Naive thymus-derived CD4-positive, alpha-beta T cell (primary cell): ENCODE measurements at regions of chr6 and their contacts with region 1.

Region 1: DNA sequence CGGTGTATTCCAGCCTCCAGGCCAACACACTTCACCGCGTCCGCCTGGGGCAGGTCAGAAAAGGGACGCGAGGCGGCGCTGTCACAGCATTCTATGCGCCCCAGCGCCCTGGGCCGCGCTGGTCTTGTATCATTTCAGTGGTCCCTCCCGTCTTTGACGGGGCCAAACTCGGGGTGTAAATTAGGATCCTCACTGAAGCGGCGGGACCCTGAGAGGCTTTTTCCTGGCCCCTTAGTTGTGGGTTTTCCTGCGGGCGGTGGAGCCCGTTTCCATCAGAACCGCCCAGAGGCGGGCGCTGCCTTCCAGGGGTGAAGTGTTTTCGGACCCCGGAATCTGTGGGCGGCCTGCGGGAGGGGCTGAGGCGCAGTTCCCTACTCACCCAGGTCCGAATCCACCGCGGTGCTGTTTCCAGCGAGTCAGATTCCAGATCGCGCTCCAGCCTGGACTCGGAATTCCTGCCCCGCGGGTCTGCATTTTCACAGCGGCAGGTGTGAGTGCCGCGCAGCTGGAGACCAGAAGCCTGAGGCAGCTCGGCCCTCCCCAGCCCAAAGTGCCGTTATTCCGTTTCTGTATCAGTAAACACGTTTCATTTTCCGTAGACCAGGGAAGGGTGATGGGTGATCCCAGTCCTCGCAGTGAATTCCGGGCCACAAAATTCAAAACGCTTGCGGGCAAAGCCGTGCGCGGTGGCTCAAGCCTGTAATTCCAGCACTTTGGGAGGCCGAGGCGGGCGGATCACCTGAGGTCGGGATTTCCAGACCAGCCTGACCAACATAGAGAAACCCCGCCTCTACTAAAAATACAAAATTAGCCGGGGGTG is 3.9 kb upstream of the MICB start:
- DNase-seq: peak; percentile 33 to 78 (median 62)
- ATAC-seq: peak; percentile 65
- H3K4me3 ChIP-seq: peak overlapping the region; percentile 87
- H3K4me3 Mint-ChIP-seq: peak overlapping the region; percentile 78 to 93 (median 88)
- H3K27ac ChIP-seq: peak overlapping the region; percentile 81
- H3K27ac Mint-ChIP-seq: peak overlapping the region; percentile 36 to 98 (median 87)
- H3K4me1 ChIP-seq: peaks cover 17 to 24% of the 10 kb centered on the region in 2 donors
- H3K4me1 Mint-ChIP-seq: peaks cover 41 to 61% (median 50%) of the 10 kb centered on the region in 7 donors
- H3K27me3 ChIP-seq: no peaks in the 10 kb centered on the region
- H3K27me3 Mint-ChIP-seq: no peaks in the 10 kb centered on the region

Region 2: DNA sequence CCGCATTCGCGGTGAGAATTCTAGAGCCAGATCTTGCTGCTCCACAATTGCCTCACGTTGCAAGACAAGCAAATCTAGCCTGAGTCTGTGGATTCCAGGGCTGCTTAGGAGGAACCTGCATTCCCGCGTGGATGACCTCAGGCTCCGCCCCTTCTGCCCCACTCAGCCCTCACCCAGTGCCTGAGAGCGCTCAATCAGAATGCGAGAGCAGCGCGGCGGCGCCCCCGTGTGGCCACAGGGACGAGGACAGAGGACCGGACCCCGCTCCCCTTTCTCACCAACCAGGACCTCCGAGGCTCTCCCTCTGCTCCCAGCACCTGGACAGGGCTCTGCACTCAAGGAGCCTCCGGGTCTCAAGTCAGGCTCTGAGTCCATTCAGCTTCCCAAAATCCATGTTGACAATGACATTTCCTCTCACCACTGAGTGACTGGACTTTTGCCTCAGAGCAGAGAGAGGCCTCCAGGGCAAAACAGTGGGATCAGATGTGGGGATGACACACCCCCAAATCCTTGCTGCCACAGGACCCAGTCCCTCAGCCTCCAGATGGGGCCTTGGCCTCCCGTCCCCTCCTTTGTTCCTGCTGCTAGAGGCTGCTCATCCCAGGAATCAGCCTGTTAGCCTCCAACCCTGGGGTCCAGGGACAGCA is 1097.1 kb before region 1 on chr6:
- CTCF ChIA-PET with region 1: no interaction called
- POLR2A ChIA-PET with region 1: no interaction called
- intact Hi-C with region 1: no loop called
- DNase-seq: peak; percentile 58 to 89 (median 76)
- ATAC-seq: peak; percentile 99
- H3K4me3 ChIP-seq: no peak overlapping the region
- H3K4me3 Mint-ChIP-seq: peak overlapping the region in 2 of 10 donors; percentile 39 to 44
- H3K27ac ChIP-seq: no peak overlapping the region
- H3K27ac Mint-ChIP-seq: peak overlapping the region in 1 of 9 donors; percentile 67
- H3K4me1 ChIP-seq: no peaks in the 10 kb centered on the region
- H3K4me1 Mint-ChIP-seq: peaks cover 0 to 6% (median 0%) of the 10 kb centered on the region in 7 donors
- H3K27me3 ChIP-seq: peaks cover 0 to 4% of the 10 kb centered on the region in 2 donors
- H3K27me3 Mint-ChIP-seq: peaks cover 20 to 51% (median 40%) of the 10 kb centered on the region in 5 donors

Region 3: GRCh38 chr6:31403283-31403989 is 90.6 kb before region 1 on chr6 and contains the start of gene MICA:
- CTCF ChIA-PET with region 1: interaction called, 4 read pairs
- POLR2A ChIA-PET with region 1: interaction called, 4 read pairs
- intact Hi-C with region 1: loop called in 1 of 2 experiments (anchors 2 kb)
- DNase-seq: peak in 8 of 9 donors; percentile 32 to 79 (median 41)
- ATAC-seq: peak; percentile 71
- H3K4me3 ChIP-seq: peak within 1 kb of the TSS; percentile 79
- H3K4me3 Mint-ChIP-seq: peak within 1 kb of the TSS; percentile 83 to 98 (median 90)
- H3K27ac ChIP-seq: peak within 1 kb of the TSS; percentile 76
- H3K27ac Mint-ChIP-seq: peak within 1 kb of the TSS; percentile 25 to 94 (median 78)
- H3K4me1 ChIP-seq: peaks cover 17 to 19% of the 10 kb centered on the region in 2 donors
- H3K4me1 Mint-ChIP-seq: peaks cover 64 to 90% (median 70%) of the 10 kb centered on the region in 7 donors
- H3K27me3 ChIP-seq: no peaks in the 10 kb centered on the region
- H3K27me3 Mint-ChIP-seq: peaks cover 0 to 2% (median 0%) of the 10 kb centered on the region in 5 donors
- total RNA-seq, gene MICA: 12.1 to 17.4 (median 15.2) TPM

Region 4: GRCh38 chr6:31462964-31463870 is 30.9 kb before region 1 on chr6:
- CTCF ChIA-PET with region 1: interaction called, 3 read pairs
- POLR2A ChIA-PET with region 1: interaction called, 3 read pairs
- intact Hi-C with region 1: loop called in 1 of 2 experiments (anchors 1 kb)
- DNase-seq: peak; percentile 77 to 92 (median 90)
- ATAC-seq: peak; percentile 95
- H3K4me3 ChIP-seq: peak overlapping the region; percentile 90
- H3K4me3 Mint-ChIP-seq: peak overlapping the region; percentile 96 to 100 (median 100)
- H3K27ac ChIP-seq: peak overlapping the region; percentile 99
- H3K27ac Mint-ChIP-seq: peak overlapping the region; percentile 96 to 99 (median 99)
- H3K4me1 ChIP-seq: peaks cover 34 to 37% of the 10 kb centered on the region in 2 donors
- H3K4me1 Mint-ChIP-seq: peaks cover 41 to 70% (median 61%) of the 10 kb centered on the region in 7 donors
- H3K27me3 ChIP-seq: no peaks in the 10 kb centered on the region
- H3K27me3 Mint-ChIP-seq: peaks cover 0 to 9% (median 0%) of the 10 kb centered on the region in 5 donors

Region 5: GRCh38 chr6:31541658-31542521 is 47.8 kb after region 1 on chr6 and contains the start of gene DDX39B:
- CTCF ChIA-PET with region 1: interaction called, 28 read pairs
- POLR2A ChIA-PET with region 1: interaction called, 77 read pairs
- intact Hi-C with region 1: loop called (anchors 1 kb)
- DNase-seq: peak; percentile 80 to 97 (median 94)
- ATAC-seq: peak; percentile 83
- H3K4me3 ChIP-seq: peak within 1 kb of the TSS; percentile 77
- H3K4me3 Mint-ChIP-seq: peak within 1 kb of the TSS; percentile 84 to 99 (median 98)
- H3K27ac ChIP-seq: peak within 1 kb of the TSS; percentile 97
- H3K27ac Mint-ChIP-seq: peak within 1 kb of the TSS; percentile 90 to 100 (median 100)
- H3K4me1 ChIP-seq: peaks cover 34 to 45% of the 10 kb centered on the region in 2 donors
- H3K4me1 Mint-ChIP-seq: peaks cover 34 to 65% (median 55%) of the 10 kb centered on the region in 7 donors
- H3K27me3 ChIP-seq: no peaks in the 10 kb centered on the region
- H3K27me3 Mint-ChIP-seq: no peaks in the 10 kb centered on the region
- total RNA-seq, gene DDX39B: 443 to 761 (median 546) TPM

Region 6: DNA sequence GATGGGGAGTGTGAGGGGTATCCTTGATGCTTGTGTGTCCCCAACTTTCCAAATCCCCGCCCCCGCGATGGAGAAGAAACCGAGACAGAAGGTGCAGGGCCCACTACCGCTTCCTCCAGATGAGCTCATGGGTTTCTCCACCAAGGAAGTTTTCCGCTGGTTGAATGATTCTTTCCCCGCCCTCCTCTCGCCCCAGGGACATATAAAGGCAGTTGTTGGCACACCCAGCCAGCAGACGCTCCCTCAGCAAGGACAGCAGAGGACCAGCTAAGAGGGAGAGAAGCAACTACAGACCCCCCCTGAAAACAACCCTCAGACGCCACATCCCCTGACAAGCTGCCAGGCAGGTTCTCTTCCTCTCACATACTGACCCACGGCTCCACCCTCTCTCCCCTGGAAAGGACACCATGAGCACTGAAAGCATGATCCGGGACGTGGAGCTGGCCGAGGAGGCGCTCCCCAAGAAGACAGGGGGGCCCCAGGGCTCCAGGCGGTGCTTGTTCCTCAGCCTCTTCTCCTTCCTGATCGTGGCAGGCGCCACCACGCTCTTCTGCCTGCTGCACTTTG is 81.3 kb after region 1 on chr6 and contains the start of gene TNF:
- CTCF ChIA-PET with region 1: interaction called, 3 read pairs
- POLR2A ChIA-PET with region 1: interaction called, 36 read pairs
- intact Hi-C with region 1: loop called in 1 of 2 experiments (anchors 2 kb)
- DNase-seq: peak in 4 of 9 donors; percentile 37 to 89 (median 59)
- ATAC-seq: peak; percentile 26
- H3K4me3 ChIP-seq: peak within 1 kb of the TSS; percentile 77
- H3K4me3 Mint-ChIP-seq: peak within 1 kb of the TSS; percentile 85 to 99 (median 94)
- H3K27ac ChIP-seq: peak within 1 kb of the TSS; percentile 97
- H3K27ac Mint-ChIP-seq: peak within 1 kb of the TSS; percentile 91 to 99 (median 99)
- H3K4me1 ChIP-seq: peaks cover 62 to 71% of the 10 kb centered on the region in 2 donors
- H3K4me1 Mint-ChIP-seq: peaks cover 54 to 98% (median 90%) of the 10 kb centered on the region in 7 donors
- H3K27me3 ChIP-seq: no peaks in the 10 kb centered on the region
- H3K27me3 Mint-ChIP-seq: peaks cover 0 to 3% (median 0%) of the 10 kb centered on the region in 5 donors
- total RNA-seq, gene TNF: 5.4 to 125 (median 8.7) TPM

Region 7: DNA sequence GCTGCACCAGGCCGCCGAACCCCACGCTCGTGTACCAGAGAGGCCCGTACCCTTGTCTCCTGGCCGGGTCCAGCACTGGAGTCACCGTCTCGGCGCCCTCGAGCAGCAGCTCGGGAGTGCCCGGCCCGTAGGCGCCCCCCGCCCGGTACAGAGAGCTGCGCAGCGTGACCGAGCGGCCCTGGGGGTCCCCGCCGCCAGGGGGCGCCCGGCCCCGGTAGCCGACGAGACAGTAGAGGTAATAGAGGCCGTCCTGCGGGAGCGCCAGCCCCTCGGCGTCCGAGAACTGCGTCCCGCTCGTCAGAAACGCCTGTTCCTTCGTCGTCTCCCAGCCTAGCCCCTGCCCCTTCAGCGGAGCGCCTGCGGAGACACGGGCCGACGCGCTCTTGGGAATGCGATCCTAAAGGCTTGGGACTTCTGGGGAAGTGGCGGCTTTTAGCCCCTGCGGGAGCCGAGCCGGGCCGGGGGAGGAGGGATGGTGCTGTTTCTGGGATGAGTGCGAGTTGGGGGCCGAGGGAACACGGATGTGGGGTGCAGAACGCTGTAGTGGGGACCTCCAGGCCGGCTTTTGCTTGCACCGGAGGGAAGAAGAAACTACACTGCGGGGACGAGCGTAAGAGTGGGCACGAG is 86.8 kb after region 1 on chr6:
- CTCF ChIA-PET with region 1: interaction called, 14 read pairs
- POLR2A ChIA-PET with region 1: interaction called, 36 read pairs
- intact Hi-C with region 1: loop called in 1 of 2 experiments (anchors 2 kb)
- DNase-seq: peak; percentile 79 to 96 (median 88)
- ATAC-seq: peak; percentile 87
- H3K4me3 ChIP-seq: peak overlapping the region; percentile 97
- H3K4me3 Mint-ChIP-seq: peak overlapping the region; percentile 88 to 100 (median 99)
- H3K27ac ChIP-seq: peak overlapping the region; percentile 97
- H3K27ac Mint-ChIP-seq: peak overlapping the region; percentile 94 to 100 (median 97)
- H3K4me1 ChIP-seq: peaks cover 54 to 60% of the 10 kb centered on the region in 2 donors
- H3K4me1 Mint-ChIP-seq: peaks cover 47 to 80% (median 63%) of the 10 kb centered on the region in 7 donors
- H3K27me3 ChIP-seq: no peaks in the 10 kb centered on the region
- H3K27me3 Mint-ChIP-seq: no peaks in the 10 kb centered on the region